Activated naive CD4-positive, alpha-beta T cell treated with anti-CD3 and anti-CD28 coated beads for 36 hours (primary cell): ENCODE measurements at regions of chr6 and their contacts with region 1.

Region 1: DNA sequence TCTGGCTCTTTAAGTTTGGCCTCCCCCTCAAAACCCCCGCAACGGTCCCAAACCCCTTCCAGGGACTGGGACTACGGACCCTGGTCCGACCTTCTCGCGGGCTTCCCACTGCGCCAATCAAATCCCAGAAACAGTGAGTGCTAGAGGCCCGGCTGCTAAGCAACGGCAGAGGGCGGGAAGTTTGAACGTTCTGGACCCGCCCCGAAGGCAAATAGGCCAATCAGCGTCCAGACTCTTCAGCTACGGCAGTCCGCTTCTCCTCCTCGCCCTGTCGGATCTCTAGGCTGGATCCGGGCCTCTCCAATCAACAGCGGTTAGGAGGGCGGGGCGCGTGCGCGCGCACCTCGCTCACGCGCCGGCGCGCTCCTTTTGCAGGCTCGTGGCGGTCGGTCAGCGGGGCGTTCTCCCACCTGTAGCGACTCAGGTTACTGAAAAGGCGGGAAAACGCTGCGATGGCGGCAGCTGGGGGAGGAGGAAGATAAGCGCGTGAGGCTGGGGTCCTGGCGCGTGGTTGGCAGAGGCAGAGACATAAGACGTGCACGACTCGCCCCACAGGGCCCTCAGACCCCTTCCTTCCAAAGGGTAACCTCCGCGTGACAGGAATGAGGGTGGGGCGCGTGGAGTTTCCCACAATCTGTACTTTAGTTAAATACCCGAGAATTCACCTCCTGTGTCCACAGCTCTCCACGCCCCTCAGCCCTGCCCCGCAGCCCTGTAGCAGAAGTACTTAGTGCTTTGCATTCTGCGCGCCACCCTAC is at the start of gene MSH5:
- DNase-seq: peak; percentile 99
- H3K4me3 Mint-ChIP-seq: peak within 1 kb of the TSS; percentile 95
- H3K27ac Mint-ChIP-seq: peak within 1 kb of the TSS; percentile 93
- H3K4me1 Mint-ChIP-seq: peaks cover 45% of the 10 kb centered on the region
- H3K27me3 Mint-ChIP-seq: no peaks in the 10 kb centered on the region
- total RNA-seq, gene MSH5: 101 to 105 TPM

Region 2: DNA sequence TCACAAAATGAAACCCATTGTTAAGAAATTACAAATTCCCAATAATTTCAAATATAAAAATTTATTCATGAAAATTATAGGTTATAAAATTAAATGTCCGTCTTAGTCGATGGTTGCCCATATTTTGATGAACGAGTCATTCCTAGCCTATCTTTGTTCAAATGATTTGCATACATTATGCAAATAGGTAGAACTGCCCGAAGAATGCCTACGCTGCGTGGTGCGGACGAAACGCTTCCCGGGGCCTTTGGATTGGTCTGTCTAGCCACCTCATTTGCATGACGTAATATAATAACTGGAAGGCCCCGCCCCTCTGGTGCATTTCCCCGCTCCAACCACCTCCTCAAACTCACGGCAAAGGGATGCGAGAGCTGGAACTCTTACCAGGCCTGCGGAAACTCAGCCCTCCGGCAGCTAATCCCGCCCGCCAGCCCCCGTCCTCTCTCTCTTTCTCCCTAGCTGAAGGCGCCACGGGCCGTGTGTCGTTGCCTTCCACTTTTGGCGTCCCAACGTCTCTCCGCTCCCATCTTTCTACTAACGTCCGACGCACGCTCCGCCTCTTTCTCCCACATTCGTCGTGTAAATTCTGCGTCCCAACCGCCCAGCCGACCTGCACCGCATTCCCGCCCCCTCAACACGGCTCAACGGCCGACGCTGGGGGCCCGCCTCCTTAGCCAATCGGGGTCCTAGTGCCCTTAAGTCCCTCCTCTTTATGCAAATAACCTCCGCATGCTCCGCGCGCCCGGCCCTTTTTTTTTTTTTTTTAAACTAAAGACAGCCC is 119.8 kb before region 1 on chr6:
- CTCF ChIA-PET with region 1: no interaction called
- intact Hi-C with region 1: loop called (anchors 1 kb)
- DNase-seq: peak; percentile 99
- H3K4me3 Mint-ChIP-seq: peak overlapping the region; percentile 83
- H3K27ac Mint-ChIP-seq: peak overlapping the region; percentile 97
- H3K4me1 Mint-ChIP-seq: peaks cover 55% of the 10 kb centered on the region
- H3K27me3 Mint-ChIP-seq: no peaks in the 10 kb centered on the region

Region 3: DNA sequence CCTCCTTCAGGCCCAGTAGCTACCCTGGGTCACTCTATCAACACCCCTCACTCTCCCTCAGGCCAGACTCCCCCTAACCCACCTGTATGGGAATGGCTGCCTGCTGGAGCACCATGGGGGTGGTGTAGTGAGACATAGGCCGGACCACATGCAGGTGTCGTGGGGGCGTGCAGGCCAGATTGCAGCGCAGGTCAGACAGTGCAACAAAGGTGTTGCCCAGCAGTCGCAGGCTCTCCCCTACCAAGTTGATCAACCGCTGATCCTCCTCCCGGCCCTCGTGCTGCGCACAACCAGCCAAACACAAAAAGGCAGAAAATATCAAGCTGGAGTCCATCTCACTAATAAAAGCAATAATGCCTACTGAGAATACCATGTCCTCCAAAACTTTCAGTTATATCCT is 94.5 kb before region 1 on chr6:
- CTCF ChIA-PET with region 1: no interaction called
- intact Hi-C with region 1: no loop called
- DNase-seq: no peak
- H3K4me3 Mint-ChIP-seq: no peak overlapping the region
- H3K27ac Mint-ChIP-seq: no peak overlapping the region
- H3K4me1 Mint-ChIP-seq: peaks cover 11% of the 10 kb centered on the region
- H3K27me3 Mint-ChIP-seq: no peaks in the 10 kb centered on the region

Region 4: DNA sequence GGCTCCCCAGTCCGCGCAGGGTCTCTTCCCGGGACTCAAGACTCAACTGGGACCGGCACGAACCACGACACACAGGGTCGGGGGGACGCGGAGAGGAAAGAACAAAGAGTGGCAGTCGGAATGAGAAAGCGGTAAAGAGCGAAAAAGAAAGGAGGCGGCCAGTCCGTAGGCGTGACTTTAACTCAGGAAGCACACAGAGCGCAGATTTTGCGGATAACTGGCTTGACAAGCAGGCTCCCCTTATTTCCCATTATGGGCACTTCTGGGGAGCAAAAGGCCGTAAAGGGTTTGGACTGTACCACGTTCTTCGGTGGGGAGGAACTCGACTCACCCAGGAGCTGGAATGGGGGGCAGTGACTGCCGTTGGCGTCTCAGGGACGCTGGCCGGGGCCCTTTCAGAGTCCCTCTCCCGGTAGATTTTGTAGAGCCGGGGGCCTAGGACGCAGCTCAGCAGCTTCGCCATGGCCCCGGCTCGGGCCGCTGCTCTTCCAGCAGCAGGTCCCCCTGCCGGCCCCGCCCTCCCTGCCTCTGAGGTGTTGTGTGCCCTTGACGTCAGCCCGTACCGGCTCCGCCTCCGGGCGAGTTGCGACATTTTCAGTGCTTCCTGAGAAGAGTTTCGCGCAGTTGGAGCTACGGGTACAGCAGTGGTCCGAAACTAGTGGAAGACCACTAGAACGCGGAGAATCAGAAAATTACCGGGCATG is 36.8 kb before region 1 on chr6 and contains the start of gene ABHD16A:
- CTCF ChIA-PET with region 1: interaction called, 4 read pairs
- intact Hi-C with region 1: loop called (anchors 1 kb)
- DNase-seq: peak; percentile 99
- H3K4me3 Mint-ChIP-seq: peak within 1 kb of the TSS; percentile 99
- H3K27ac Mint-ChIP-seq: peak within 1 kb of the TSS; percentile 97
- H3K4me1 Mint-ChIP-seq: peaks cover 22% of the 10 kb centered on the region
- H3K27me3 Mint-ChIP-seq: no peaks in the 10 kb centered on the region
- total RNA-seq, gene ABHD16A: 19.9 to 22.5 TPM

Region 5: DNA sequence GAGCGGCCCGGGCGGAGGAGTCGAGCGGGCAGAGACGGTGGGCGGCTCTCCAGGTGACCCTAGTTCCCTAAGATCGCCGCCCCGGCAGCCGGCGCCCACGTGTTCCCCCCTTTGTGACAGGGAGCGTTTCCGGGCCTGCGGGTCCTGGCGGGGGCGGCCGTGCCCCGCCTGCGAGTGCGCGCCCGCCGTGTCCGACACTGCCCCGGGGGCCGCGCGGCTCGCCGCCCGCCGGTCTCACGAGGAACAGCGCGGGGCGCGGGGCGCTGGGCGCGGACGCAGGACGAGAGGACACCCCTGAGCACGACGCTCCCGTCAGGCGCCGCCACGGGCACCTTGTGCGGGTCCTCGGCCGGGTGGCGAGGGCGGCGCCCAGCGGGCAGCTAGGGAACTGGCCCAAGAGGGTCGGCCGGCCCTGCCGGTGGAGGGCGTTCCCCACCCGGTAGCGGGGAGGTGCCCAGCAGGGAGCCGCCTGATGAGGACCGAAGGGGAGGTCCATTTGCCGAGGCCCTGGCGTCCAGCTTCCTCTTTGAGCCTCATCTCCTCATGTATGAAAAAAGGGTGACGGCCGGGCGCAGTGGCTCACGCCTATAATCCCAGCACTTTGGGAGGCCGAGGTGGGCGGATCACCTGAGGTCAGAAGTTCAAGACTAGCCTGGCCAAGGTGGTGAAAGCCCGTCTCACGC is 55.9 kb after region 1 on chr6 and contains the start of gene VARS1:
- CTCF ChIA-PET with region 1: interaction called, 7 read pairs
- intact Hi-C with region 1: loop called (anchors 1 kb)
- DNase-seq: peak; percentile 89
- H3K4me3 Mint-ChIP-seq: peak within 1 kb of the TSS; percentile 99
- H3K27ac Mint-ChIP-seq: peak within 1 kb of the TSS; percentile 96
- H3K4me1 Mint-ChIP-seq: peaks cover 43% of the 10 kb centered on the region
- H3K27me3 Mint-ChIP-seq: no peaks in the 10 kb centered on the region
- total RNA-seq, gene VARS1: 157 to 161 TPM

Region 6: DNA sequence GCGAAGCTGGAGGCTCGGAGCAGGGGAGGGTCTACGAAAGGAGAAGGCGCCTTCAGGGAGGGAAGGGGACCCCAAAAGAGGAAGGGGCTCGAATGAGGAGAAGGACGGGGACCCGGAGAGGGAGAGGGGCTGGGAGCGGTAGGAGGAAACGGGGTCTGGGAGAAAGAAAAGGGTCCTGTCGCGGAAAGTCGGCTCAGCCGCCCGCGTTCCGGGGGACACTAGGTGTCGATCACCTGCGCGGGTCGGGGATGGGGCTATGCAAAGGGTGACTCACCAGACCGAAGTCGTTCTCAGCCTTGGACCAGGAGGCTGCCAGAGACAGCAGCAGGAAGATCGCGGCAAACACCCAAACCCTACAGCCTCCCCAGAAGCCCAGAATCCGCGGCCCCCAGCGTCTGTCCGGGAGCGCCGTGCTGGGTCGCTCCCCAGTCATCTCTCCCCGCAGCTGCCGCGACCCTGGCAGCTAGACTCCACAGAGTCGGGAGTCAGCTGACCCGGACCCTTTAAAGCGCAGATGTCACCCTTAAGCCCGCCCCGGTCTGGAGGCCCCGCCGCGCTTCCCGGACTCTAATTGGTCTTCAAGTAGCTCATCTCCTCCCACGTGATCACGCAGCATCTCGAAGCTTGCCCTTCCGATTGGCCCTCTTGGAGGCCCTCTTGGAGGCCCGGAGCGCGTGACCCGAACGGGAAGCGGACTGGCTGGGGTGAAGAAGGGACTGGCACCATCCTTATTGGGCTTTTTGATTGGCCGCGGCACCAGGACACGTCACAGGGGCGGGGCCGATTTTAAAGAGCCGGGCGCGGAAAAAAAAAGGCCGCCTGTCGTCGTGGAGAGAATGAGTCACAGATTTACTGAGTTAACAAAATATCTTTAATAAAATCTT is 122.8 kb after region 1 on chr6 and contains the start of gene NEU1:
- CTCF ChIA-PET with region 1: interaction called, 5 read pairs
- intact Hi-C with region 1: loop called (anchors 1 kb)
- DNase-seq: peak; percentile 100
- H3K4me3 Mint-ChIP-seq: peak within 1 kb of the TSS; percentile 90
- H3K27ac Mint-ChIP-seq: peak within 1 kb of the TSS; percentile 73
- H3K4me1 Mint-ChIP-seq: peaks cover 11% of the 10 kb centered on the region
- H3K27me3 Mint-ChIP-seq: no peaks in the 10 kb centered on the region
- total RNA-seq, gene NEU1: 8.4 to 9.2 TPM

Region 7: GRCh38 chr6:32843979-32844838 is 1104.4 kb after region 1 on chr6 and contains the start of gene PSMB8:
- CTCF ChIA-PET with region 1: no interaction called
- intact Hi-C with region 1: loop called (anchors 5 kb)
- DNase-seq: peak; percentile 100
- H3K4me3 Mint-ChIP-seq: peak within 1 kb of the TSS; percentile 98
- H3K27ac Mint-ChIP-seq: peak within 1 kb of the TSS; percentile 99
- H3K4me1 Mint-ChIP-seq: peaks cover 71% of the 10 kb centered on the region
- H3K27me3 Mint-ChIP-seq: no peaks in the 10 kb centered on the region
- total RNA-seq, gene PSMB8: 286 to 308 TPM